ENCODE measurements at regions of chr1 and their contacts with region 1.

Region 1: GRCh38 chr1:226656601-226657277 is 82.3 kb downstream of the ITPKB start:
- DNase-seq: no peak
- ATAC-seq: peak in 1 of 8 donors; percentile 9
- H3K4me3 ChIP-seq: no peak overlapping the region
- H3K27ac ChIP-seq: peak overlapping the region in 6 of 10 donors; percentile 52 to 92 (median 77)
- H3K4me1 ChIP-seq: peaks cover 0 to 88% (median 0%) of the 10 kb centered on the region in 9 donors
- H3K27me3 ChIP-seq: no peaks in the 10 kb centered on the region
- CTCF ChIP-seq: no peak

Region 2: GRCh38 chr1:226702957-226703831 is 46.5 kb after region 1 on chr1:
- intact Hi-C with region 1: loop called in 1 of 10 experiments (anchors 5 kb)
- DNase-seq: peak; percentile 78 to 82
- ATAC-seq: peak; percentile 85 to 92 (median 90)
- H3K4me3 ChIP-seq: peak overlapping the region; percentile 33 to 81 (median 70)
- H3K27ac ChIP-seq: peak overlapping the region; percentile 94 to 99 (median 96)
- H3K4me1 ChIP-seq: peaks cover 0 to 88% (median 48%) of the 10 kb centered on the region in 9 donors
- H3K27me3 ChIP-seq: no peaks in the 10 kb centered on the region
- CTCF ChIP-seq: no peak

Region 3: DNA sequence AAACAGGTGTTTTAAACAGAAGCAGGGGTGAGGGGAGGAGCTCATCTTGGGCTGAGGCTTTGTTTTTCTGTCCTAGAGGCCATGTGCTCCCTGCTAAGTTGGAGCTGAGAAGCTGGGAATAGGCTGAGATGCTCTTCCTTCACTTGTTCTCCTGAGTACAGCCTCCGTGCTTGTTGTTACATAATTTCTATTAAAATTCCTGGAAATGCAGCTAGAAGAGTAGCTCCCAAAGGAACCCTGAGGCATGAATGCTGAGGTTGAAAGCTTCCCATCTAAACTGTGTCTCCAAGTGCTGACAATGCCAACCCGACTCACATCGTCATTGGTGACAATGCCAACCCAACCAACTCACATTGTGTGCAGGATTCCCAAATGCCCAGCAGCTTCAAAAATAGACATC is 95.0 kb after region 1 on chr1:
- intact Hi-C with region 1: no loop called
- DNase-seq: no peak
- ATAC-seq: no peak
- H3K4me3 ChIP-seq: no peak overlapping the region
- H3K27ac ChIP-seq: no peak overlapping the region
- H3K4me1 ChIP-seq: peaks cover 0 to 3% (median 0%) of the 10 kb centered on the region in 9 donors
- H3K27me3 ChIP-seq: no peaks in the 10 kb centered on the region
- CTCF ChIP-seq: no peak

Region 4: GRCh38 chr1:226863446-226863845 is 206.7 kb after region 1 on chr1:
- intact Hi-C with region 1: no loop called
- DNase-seq: no peak
- ATAC-seq: no peak
- H3K4me3 ChIP-seq: no peak overlapping the region
- H3K27ac ChIP-seq: no peak overlapping the region
- H3K4me1 ChIP-seq: no peaks in the 10 kb centered on the region
- H3K27me3 ChIP-seq: no peaks in the 10 kb centered on the region
- CTCF ChIP-seq: no peak